GM10248 (cell line): ENCODE measurements at regions of chr11 and their contacts with region 1.

Region 1: GRCh38 chr11:13216019-13216710 is 61.4 kb upstream of the BMAL1 start:
- DNase-seq: no peak
- CTCF ChIP-seq: no peak

Region 2: GRCh38 chr11:13289081-13289480 is 72.9 kb after region 1 on chr11:
- CTCF ChIA-PET with region 1: no interaction called
- POLR2A ChIA-PET with region 1: no interaction called
- DNase-seq: no peak
- CTCF ChIP-seq: no peak

Region 3: DNA sequence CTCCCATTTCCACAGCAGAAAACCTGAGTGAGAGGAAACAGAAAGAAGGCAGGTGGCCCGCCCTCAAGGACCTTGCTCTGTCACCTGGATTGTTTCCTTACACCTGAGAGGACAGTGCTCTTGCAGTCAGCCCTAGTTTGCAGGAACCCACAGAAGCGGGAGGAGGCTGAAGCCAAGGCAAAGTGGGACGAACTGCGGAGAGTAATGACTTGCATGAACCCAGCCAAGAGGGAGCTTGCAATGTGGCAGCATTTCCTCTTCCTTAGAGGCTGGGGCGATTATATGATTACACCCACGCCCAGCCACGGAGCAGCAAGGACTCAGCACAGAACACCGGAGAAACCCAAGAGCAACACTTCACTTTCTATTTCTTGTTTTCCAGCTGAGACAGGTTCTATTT is 849.0 kb after region 1 on chr11:
- CTCF ChIA-PET with region 1: no interaction called
- POLR2A ChIA-PET with region 1: no interaction called
- DNase-seq: no peak
- CTCF ChIP-seq: no peak

Region 4: GRCh38 chr11:14835491-14836105 is 1619.4 kb after region 1 on chr11:
- CTCF ChIA-PET with region 1: no interaction called
- POLR2A ChIA-PET with region 1: interaction called, 15 read pairs
- DNase-seq: no peak
- CTCF ChIP-seq: no peak